ENCODE measurements at regions of chr9 and their contacts with region 1.

Region 1: GRCh38 chr9:12819436-12820185 is 44.8 kb downstream of the LURAP1L start:
- DNase-seq: peak in 1 of 2 donors; percentile 18
- ATAC-seq: no peak

Region 2: DNA sequence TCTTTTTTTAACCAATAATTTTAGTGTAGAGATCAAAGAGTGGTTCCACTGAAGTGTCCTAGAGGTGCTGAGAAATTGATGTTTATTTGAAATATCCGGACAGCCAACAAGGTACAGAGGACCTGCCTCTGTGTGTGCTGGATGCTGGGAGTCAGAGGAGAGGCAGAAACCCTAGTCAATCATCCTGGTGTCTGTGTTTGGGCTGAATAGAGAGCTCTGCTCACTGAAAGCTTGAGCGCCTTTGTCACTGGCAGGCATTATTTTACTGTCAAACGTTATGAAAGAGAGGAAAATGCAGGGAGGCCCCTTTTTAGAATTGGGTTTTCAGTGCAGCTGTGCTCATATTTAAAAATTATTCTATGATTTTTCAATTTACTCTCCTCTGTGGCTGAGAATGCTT is 606.8 kb before region 1 on chr9:
- intact Hi-C with region 1: no loop called
- DNase-seq: no peak
- ATAC-seq: no peak

Region 3: GRCh38 chr9:12784461-12785259 is 35.0 kb before region 1 on chr9:
- intact Hi-C with region 1: loop called in 1 of 2 experiments (anchors 5 kb)
- DNase-seq: peak in 1 of 2 donors; percentile 50
- ATAC-seq: peak; percentile 82

Region 4: DNA sequence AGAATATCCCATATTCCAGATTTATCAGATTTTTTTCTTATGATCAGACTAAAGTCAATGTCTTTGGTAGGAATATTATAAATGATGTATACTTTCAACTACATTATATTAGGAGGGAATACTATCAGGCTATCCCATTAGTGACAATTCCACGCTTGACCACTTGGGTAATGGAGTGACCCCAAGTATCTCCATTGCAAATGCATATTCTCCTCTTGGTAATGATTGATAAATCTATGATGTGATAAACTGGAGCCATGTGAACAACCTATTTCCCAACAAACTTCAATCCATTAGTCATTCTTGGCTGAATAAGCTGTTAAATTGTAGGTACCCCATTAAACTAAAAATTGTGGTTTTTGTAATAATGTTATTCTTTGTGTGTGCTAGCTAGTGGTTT is 472.1 kb after region 1 on chr9:
- intact Hi-C with region 1: no loop called
- DNase-seq: no peak
- ATAC-seq: no peak